Activated CD4-positive, alpha-beta T cell treated with anti-CD3 and anti-CD28 coated beads for 36 hours (primary cell): ENCODE measurements at regions of chr13 and their contacts with region 1.

Region 1: GRCh38 chr13:26985285-26985878 is 186.2 kb downstream of the USP12 start:
- DNase-seq: peak; percentile 84
- ATAC-seq: peak; percentile 92
- H3K4me3 Mint-ChIP-seq: no peak overlapping the region
- H3K27ac Mint-ChIP-seq: no peak overlapping the region
- H3K4me1 Mint-ChIP-seq: no peaks in the 10 kb centered on the region
- H3K27me3 Mint-ChIP-seq: peaks cover 12% of the 10 kb centered on the region

Region 2: DNA sequence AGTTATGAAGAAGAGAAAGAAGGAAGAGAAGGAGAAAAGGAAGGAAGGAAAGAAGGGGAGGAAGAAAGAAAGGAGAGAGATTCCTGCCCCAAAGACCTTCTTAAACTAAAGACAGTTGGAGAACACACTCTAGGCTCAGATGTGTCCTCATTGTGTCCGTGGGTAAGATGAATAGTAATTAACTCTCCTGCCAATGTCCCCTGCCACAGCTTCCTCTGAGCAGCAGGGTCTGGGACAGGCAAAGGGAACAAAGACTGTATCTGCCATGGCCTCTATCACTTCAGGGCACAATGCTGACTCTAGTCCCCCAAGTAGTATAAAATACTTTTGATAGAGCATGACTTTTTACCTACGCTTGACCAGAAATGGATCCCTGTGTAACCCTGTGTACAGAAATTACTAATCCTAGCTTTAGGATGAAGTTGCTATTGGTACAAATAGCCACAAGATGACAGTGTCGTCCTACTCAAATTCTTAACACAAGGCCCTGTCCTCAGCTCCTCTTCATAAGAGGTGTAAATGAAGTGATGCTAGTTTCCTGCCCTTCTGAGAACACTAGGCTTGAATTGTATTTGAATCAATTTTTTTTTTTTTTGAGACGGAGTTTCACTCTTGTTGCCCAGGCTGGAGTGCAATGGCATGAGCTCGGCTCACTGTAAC is 38.6 kb before region 1 on chr13:
- CTCF ChIA-PET with region 1: interaction called, 24 read pairs
- POLR2A ChIA-PET with region 1: interaction called, 4 read pairs
- intact Hi-C with region 1: loop called in 1 of 2 experiments (anchors 2 kb)
- DNase-seq: no peak
- ATAC-seq: peak; percentile 69
- H3K4me3 Mint-ChIP-seq: no peak overlapping the region
- H3K27ac Mint-ChIP-seq: no peak overlapping the region
- H3K4me1 Mint-ChIP-seq: no peaks in the 10 kb centered on the region
- H3K27me3 Mint-ChIP-seq: peaks cover 4% of the 10 kb centered on the region

Region 3: GRCh38 chr13:27171827-27172494 is 186.6 kb after region 1 on chr13:
- CTCF ChIA-PET with region 1: no interaction called
- POLR2A ChIA-PET with region 1: no interaction called
- intact Hi-C with region 1: loop called in 1 of 2 experiments (anchors 1 kb)
- DNase-seq: peak; percentile 93
- ATAC-seq: peak; percentile 84
- H3K4me3 Mint-ChIP-seq: peak overlapping the region; percentile 70
- H3K27ac Mint-ChIP-seq: peak overlapping the region; percentile 88
- H3K4me1 Mint-ChIP-seq: peaks cover 60% of the 10 kb centered on the region
- H3K27me3 Mint-ChIP-seq: no peaks in the 10 kb centered on the region

Region 4: GRCh38 chr13:27270594-27271520 is 285.5 kb after region 1 on chr13 and contains the start of gene RASL11A:
- CTCF ChIA-PET with region 1: interaction called, 11 read pairs
- POLR2A ChIA-PET with region 1: no interaction called
- intact Hi-C with region 1: loop called in 1 of 2 experiments (anchors 5 kb)
- DNase-seq: peak; percentile 82
- ATAC-seq: peak; percentile 91
- H3K4me3 Mint-ChIP-seq: peak within 1 kb of the TSS; percentile 79
- H3K27ac Mint-ChIP-seq: peak within 1 kb of the TSS; percentile 76
- H3K4me1 Mint-ChIP-seq: peaks cover 14% of the 10 kb centered on the region
- H3K27me3 Mint-ChIP-seq: peaks cover 2% of the 10 kb centered on the region
- total RNA-seq, gene RASL11A: 3.2 to 3.5 TPM

Region 5: GRCh38 chr13:27339299-27339698 is 353.9 kb after region 1 on chr13:
- CTCF ChIA-PET with region 1: interaction called, 23 read pairs
- POLR2A ChIA-PET with region 1: no interaction called
- intact Hi-C with region 1: no loop called
- DNase-seq: peak; percentile 71
- ATAC-seq: peak; percentile 90
- H3K4me3 Mint-ChIP-seq: no peak overlapping the region
- H3K27ac Mint-ChIP-seq: no peak overlapping the region
- H3K4me1 Mint-ChIP-seq: no peaks in the 10 kb centered on the region
- H3K27me3 Mint-ChIP-seq: peaks cover 7% of the 10 kb centered on the region

Region 6: DNA sequence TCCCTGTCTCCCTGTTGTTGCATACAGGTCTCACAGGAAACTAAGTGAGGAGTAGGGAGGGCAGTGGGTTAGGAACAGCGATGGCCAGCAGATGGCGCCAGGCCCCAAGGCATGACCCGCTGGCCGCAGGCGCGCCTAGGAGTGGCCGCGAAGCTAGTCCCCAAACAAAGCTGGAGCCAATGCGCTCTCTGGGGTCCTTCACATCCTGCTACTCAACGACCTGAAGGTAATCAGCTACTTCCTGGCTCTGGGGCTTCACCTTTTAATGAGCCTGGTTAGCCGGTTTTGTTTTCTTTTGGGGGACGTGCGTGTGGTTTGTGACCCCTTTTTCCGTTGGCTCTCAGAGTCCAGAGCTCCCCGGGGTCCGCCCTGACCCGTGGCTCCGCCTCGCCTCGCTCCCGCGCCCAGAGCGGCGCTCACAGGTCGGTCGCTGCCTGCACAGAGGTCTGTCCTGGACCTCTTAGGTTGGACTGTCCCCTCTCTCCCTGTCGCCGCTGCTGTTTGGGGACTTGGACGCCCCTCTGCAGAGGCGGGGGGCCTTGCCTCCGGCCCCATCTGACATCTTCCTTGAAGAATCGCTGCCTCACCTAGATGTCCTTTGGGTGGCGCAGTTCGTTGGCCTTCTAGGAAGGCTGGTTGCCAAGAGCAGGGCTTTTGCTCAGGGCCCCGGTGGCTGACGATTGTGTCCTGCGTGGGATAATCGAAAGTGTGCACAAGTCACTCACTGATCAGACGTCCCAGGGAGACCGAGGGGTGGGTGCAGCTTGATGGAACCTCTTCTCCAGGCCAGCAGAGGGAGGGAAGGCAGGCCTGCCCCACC is 376.9 kb after region 1 on chr13:
- CTCF ChIA-PET with region 1: interaction called, 183 read pairs
- POLR2A ChIA-PET with region 1: no interaction called
- intact Hi-C with region 1: loop called (anchors 1 kb)
- DNase-seq: peak; percentile 89
- ATAC-seq: peak; percentile 97
- H3K4me3 Mint-ChIP-seq: peak overlapping the region; percentile 26
- H3K27ac Mint-ChIP-seq: no peak overlapping the region
- H3K4me1 Mint-ChIP-seq: peaks cover 2% of the 10 kb centered on the region
- H3K27me3 Mint-ChIP-seq: peaks cover 8% of the 10 kb centered on the region